ENCODE measurements at regions of chr14 and their contacts with region 1.

Region 1: DNA sequence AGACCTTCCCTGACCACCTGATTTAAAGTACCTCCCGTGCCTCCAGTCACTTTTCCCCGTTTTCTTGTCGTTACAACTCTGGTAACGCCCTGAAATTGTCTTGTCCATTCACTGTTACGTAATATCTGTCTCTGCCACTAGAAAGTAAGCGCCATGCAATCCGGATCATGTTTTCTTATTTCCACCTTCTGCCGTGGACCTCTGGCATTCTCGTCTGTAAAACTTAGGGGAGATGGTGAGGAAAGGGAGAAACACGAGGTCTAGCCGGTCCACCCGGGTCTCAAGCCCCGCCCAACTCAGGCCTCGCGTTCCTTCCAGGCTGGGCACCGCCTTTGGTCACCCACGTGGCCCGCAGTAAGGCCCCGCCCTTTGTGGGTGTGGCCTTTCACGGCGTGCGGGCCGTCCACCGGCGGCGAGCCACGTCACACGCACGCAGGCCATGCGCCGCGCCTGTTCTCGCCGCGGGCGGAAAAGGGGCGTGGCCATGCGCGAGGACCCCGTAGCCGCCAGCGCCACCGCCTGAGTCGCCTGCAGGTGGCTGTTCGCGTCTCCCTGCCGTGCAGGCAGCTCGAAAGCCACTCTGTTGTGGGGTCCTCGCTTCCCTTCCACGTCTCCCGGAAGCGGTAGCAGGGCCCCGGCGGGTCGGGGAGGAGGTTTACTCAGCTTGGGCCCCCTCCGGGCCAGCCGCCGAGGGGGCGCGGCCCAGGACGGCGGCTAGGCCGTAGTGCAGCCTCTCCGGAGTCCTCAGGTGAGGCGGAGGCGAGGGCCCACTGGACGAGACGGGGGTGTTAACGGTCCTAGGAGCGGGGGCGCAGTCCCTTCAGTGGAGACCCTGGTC is at the start of gene GOLGA5:
- DNase-seq: peak; percentile 96 to 100 (median 98)

Region 2: GRCh38 chr14:92748259-92749016 is 45.5 kb before region 1 on chr14 and contains the start of gene LGMN:
- intact Hi-C with region 1: loop called (anchors 5 kb)
- DNase-seq: peak; percentile 93 to 99 (median 99)

Region 3: DNA sequence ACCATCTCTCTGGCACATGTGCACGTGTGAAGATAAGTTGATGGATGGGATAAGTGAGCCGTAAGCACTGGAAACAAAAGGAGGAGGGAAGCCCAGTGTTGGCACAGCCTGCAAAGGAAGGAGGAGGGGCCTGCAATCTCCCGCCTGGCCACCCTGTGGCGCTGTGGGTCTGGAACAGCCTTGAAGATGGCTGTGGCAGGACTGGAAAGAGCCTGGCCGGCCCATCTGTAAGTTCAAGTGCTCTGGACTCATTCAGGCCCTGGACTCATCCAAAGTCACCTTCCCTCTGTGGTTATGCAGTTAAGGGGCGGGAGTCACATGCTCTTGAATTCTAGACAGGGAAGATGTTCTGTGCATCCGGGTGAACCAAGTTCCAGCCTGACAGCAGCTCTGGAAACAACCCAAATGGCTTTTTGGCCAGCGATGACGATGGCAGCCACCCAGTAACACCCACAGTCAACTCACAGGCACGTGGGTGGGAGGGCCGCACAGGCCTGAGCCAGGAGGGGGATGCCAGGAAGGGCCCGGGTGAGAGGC is 179.4 kb after region 1 on chr14:
- intact Hi-C with region 1: no loop called
- DNase-seq: peak; percentile 38 to 97 (median 86)

Measured in head of caudate nucleus (tissue), 42 donors.